PC-9 (cell line): ENCODE measurements at regions of chr3 and their contacts with region 1.

Region 1: DNA sequence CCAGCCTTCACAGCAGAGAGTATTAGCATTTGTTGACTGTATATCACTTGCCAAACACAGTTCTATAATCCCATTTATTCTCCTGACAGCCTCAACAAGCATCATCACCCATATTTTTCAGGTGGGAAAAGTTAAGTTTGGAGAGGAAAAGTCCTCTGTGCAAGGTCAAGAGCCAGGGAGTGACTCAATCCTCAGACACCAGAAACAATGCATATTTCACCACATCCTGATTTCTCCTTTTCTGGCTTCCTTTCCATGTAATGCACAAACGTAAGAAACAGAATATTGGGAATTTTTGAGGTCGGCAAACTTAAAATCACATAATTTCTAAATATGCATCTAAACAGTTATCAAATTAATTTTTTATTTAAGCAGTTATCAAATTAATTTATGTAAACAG is 116.0 kb upstream of the GADL1 start:
- DNase-seq: no peak
- H3K4me3 ChIP-seq: no peak overlapping the region
- H3K27ac ChIP-seq: no peak overlapping the region
- H3K4me1 ChIP-seq: no peaks in the 10 kb centered on the region
- H3K27me3 ChIP-seq: no peaks in the 10 kb centered on the region
- CTCF ChIP-seq: no peak

Region 2: GRCh38 chr3:31051221-31051620 is 40.7 kb after region 1 on chr3:
- CTCF ChIA-PET with region 1: no interaction called
- POLR2A ChIA-PET with region 1: interaction called, 10 read pairs
- intact Hi-C with region 1: no loop called
- DNase-seq: peak; percentile 61 to 79
- H3K4me3 ChIP-seq: no peak overlapping the region
- H3K27ac ChIP-seq: no peak overlapping the region
- H3K4me1 ChIP-seq: no peaks in the 10 kb centered on the region
- H3K27me3 ChIP-seq: no peaks in the 10 kb centered on the region
- CTCF ChIP-seq: no peak

Region 3: GRCh38 chr3:31724661-31725060 is 714.2 kb after region 1 on chr3:
- CTCF ChIA-PET with region 1: no interaction called
- POLR2A ChIA-PET with region 1: no interaction called
- intact Hi-C with region 1: no loop called
- DNase-seq: no peak
- H3K4me3 ChIP-seq: no peak overlapping the region
- H3K27ac ChIP-seq: no peak overlapping the region
- H3K4me1 ChIP-seq: no peaks in the 10 kb centered on the region
- H3K27me3 ChIP-seq: no peaks in the 10 kb centered on the region
- CTCF ChIP-seq: peak; percentile 35; the same call in 1 of the 2 replicates